ENCODE measurements at regions of chr10 and their contacts with region 1.

Region 1: GRCh38 chr10:47024399-47025252 is 113.4 kb downstream of the PTPN20 start:
- DNase-seq: peak; percentile 84
- H3K4me3 Mint-ChIP-seq: no peak overlapping the region
- H3K27ac Mint-ChIP-seq: no peak overlapping the region
- H3K4me1 Mint-ChIP-seq: no peaks in the 10 kb centered on the region
- H3K27me3 Mint-ChIP-seq: no peaks in the 10 kb centered on the region

Region 2: DNA sequence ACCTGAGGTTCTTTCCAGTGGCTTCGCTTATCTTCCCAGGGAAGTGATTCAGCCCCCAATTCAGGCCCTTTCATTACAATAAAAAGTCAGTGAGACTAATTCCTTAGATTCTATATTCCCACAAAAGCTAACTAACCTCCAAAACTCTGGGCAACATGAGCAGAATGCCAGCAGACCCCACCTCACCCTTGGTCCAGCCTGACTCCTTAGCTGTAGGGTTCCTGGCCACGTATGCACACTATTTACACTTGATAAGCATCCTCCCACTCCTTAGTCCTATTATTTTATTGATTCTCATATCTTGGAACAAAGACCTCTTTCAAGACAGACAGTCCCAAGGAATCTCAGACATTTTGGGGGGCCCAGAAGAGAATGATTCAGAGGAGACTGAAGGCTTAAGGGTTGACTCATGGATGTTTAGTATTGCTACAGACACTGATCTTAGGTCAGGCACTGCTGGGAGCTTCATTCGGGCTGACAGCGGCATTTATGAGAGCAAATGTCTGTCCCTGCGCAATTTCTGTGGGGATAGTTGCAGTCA is 112.8 kb after region 1 on chr10:
- CTCF ChIA-PET with region 1: no interaction called
- intact Hi-C with region 1: no loop called
- DNase-seq: no peak
- H3K4me3 Mint-ChIP-seq: no peak overlapping the region
- H3K27ac Mint-ChIP-seq: no peak overlapping the region
- H3K4me1 Mint-ChIP-seq: peaks cover 7% of the 10 kb centered on the region
- H3K27me3 Mint-ChIP-seq: no peaks in the 10 kb centered on the region

Region 3: GRCh38 chr10:47306387-47307210 is 282.0 kb after region 1 on chr10:
- CTCF ChIA-PET with region 1: interaction called, 72 read pairs
- intact Hi-C with region 1: no loop called
- DNase-seq: no peak
- H3K4me3 Mint-ChIP-seq: no peak overlapping the region
- H3K27ac Mint-ChIP-seq: no peak overlapping the region
- H3K4me1 Mint-ChIP-seq: peaks cover 33% of the 10 kb centered on the region
- H3K27me3 Mint-ChIP-seq: no peaks in the 10 kb centered on the region

Region 4: GRCh38 chr10:47340608-47341170 is 316.1 kb after region 1 on chr10:
- CTCF ChIA-PET with region 1: interaction called, 24 read pairs
- intact Hi-C with region 1: loop called (anchors 1 kb)
- DNase-seq: peak; percentile 78
- H3K4me3 Mint-ChIP-seq: no peak overlapping the region
- H3K27ac Mint-ChIP-seq: no peak overlapping the region
- H3K4me1 Mint-ChIP-seq: no peaks in the 10 kb centered on the region
- H3K27me3 Mint-ChIP-seq: peaks cover 4% of the 10 kb centered on the region